Body of pancreas (tissue), 4 donors: ENCODE measurements at regions of chr18 and their contacts with region 1.

Region 1: DNA sequence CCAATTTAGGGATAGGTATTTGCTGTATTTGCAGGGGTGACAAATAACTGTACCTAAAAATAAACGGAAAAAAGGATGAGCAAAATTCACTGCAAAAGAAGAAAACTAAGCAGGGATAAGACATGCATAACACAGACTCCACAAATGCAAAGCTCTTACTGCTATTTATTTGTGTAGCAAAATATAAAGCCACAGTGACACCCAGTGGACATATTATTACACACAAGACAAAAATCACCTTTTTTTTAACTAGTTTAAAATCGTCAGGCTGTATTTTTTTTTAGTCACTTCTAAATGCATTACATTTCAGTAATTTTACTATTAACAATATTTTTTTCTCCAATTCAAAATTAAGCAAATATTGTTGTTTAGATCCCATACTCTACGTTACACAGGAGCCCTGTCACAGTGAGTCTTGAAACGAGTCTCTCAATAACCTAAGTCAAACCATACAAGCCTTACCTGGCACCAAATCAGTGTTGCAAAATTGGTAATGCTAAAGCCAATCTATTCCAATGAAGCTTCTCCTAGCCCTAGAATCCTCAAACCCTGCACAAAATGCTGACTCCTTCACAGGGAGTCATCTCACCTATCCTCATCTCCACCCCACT is 23.7 kb downstream of the METTL4 start:
- DNase-seq: no peak
- ATAC-seq: peak; percentile 47
- H3K4me3 ChIP-seq: no peak overlapping the region
- H3K27ac ChIP-seq: no peak overlapping the region
- H3K4me1 ChIP-seq: no peaks in the 10 kb centered on the region
- H3K27me3 ChIP-seq: no peaks in the 10 kb centered on the region
- CTCF ChIP-seq: peak; percentile 22 to 68 (median 56)
- POLR2A ChIP-seq: no peak

Region 2: GRCh38 chr18:2104620-2105462 is 442.7 kb before region 1 on chr18:
- intact Hi-C with region 1: loop called (anchors 10 kb)
- DNase-seq: peak; percentile 48 to 66 (median 56)
- ATAC-seq: peak; percentile 64
- H3K4me3 ChIP-seq: no peak overlapping the region
- H3K27ac ChIP-seq: no peak overlapping the region
- H3K4me1 ChIP-seq: no peaks in the 10 kb centered on the region
- H3K27me3 ChIP-seq: no peaks in the 10 kb centered on the region
- CTCF ChIP-seq: peak; percentile 51 to 70 (median 60)
- POLR2A ChIP-seq: no peak

Region 3: GRCh38 chr18:2948038-2948437 is 400.5 kb after region 1 on chr18:
- intact Hi-C with region 1: no loop called
- DNase-seq: peak; percentile 72 to 91 (median 81)
- ATAC-seq: peak; percentile 100
- H3K4me3 ChIP-seq: no peak overlapping the region
- H3K27ac ChIP-seq: peak overlapping the region in 3 of 4 donors; percentile 32 to 57 (median 35)
- H3K4me1 ChIP-seq: peaks cover 10% of the 10 kb centered on the region
- H3K27me3 ChIP-seq: no peaks in the 10 kb centered on the region
- CTCF ChIP-seq: peak in 5 of 7 experiments; percentile 32 to 54 (median 50)
- POLR2A ChIP-seq: no peak